GM12878 (cell line): ENCODE measurements at regions of chr12 and their contacts with region 1.

Region 1: GRCh38 chr12:779745-780734 is 27.7 kb downstream of the WNK1 start:
- DNase-seq: no peak
- ATAC-seq: peak; percentile 50
- H3K4me3 ChIP-seq: peak overlapping the region; percentile 50
- H3K27ac ChIP-seq: peak overlapping the region; percentile 46
- H3K4me1 ChIP-seq: peaks cover 22% of the 10 kb centered on the region
- H3K27me3 ChIP-seq: no peaks in the 10 kb centered on the region
- CTCF ChIP-seq: no peak
- EP300 ChIP-seq: no peak
- POLR2A ChIP-seq: no peak
- RAD21 ChIP-seq: no peak

Region 2: GRCh38 chr12:288687-289086 is 491.4 kb before region 1 on chr12:
- CTCF ChIA-PET with region 1: no interaction called
- POLR2A ChIA-PET with region 1: no interaction called
- RAD21 ChIA-PET with region 1: no interaction called
- SMC1A ChIA-PET with region 1: no interaction called
- in situ Hi-C with region 1: no loop called
- intact Hi-C with region 1: no loop called
- DNase-seq: no peak
- ATAC-seq: no peak
- H3K4me3 ChIP-seq: no peak overlapping the region
- H3K27ac ChIP-seq: no peak overlapping the region
- H3K4me1 ChIP-seq: peaks cover 7% of the 10 kb centered on the region
- H3K27me3 ChIP-seq: no peaks in the 10 kb centered on the region
- CTCF ChIP-seq: no peak
- EP300 ChIP-seq: no peak
- POLR2A ChIP-seq: no peak
- RAD21 ChIP-seq: no peak

Region 3: DNA sequence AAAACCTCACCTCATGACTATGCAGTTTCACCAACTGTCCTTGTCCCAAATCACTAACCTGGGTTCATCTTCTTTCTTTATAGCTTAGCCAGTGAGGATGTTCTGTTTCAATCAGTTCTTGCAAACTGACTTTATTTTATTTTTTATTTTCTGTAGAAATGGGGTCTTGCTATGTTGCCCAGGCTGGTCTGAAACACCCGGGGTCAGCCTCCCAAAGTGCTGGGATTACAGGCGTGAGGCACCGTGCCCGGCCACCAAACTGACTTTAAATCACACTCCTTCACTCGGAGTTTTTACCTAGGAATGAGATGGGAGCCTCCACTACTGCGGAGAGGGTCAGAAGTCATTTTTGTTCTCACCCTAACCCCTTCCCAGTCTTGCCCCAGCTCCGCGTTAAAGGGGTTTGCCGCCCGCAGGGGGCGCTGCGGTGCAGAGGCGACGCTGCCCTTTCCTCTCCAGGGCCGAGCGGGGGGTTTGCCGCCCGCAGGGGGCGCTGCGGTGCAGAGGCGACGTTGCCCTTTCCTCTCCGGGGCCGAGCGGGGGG is 327.3 kb before region 1 on chr12:
- CTCF ChIA-PET with region 1: no interaction called
- POLR2A ChIA-PET with region 1: no interaction called
- RAD21 ChIA-PET with region 1: no interaction called
- SMC1A ChIA-PET with region 1: no interaction called
- in situ Hi-C with region 1: no loop called
- intact Hi-C with region 1: no loop called
- DNase-seq: no peak
- ATAC-seq: peak; percentile 92
- H3K4me3 ChIP-seq: no peak overlapping the region
- H3K27ac ChIP-seq: no peak overlapping the region
- H3K4me1 ChIP-seq: no peaks in the 10 kb centered on the region
- H3K27me3 ChIP-seq: peaks cover 0 to 4% of the 10 kb centered on the region in 2 experiments; a peak in 2 of 4 replicates
- CTCF ChIP-seq: peak in 2 of 3 experiments; percentile 44 to 65; a peak in 4 of 6 replicates
- EP300 ChIP-seq: no peak
- POLR2A ChIP-seq: no peak
- RAD21 ChIP-seq: no peak

Region 4: GRCh38 chr12:614411-614970 is 165.5 kb before region 1 on chr12:
- CTCF ChIA-PET with region 1: interaction called, 3 read pairs
- POLR2A ChIA-PET with region 1: no interaction called
- RAD21 ChIA-PET with region 1: interaction called, 5 read pairs
- SMC1A ChIA-PET with region 1: interaction called, 11 read pairs
- in situ Hi-C with region 1: no loop called
- intact Hi-C with region 1: no loop called
- DNase-seq: no peak
- ATAC-seq: peak; percentile 78
- H3K4me3 ChIP-seq: no peak overlapping the region
- H3K27ac ChIP-seq: no peak overlapping the region
- H3K4me1 ChIP-seq: peaks cover 10% of the 10 kb centered on the region
- H3K27me3 ChIP-seq: no peaks in the 10 kb centered on the region
- CTCF ChIP-seq: peak; percentile 61 to 86 (median 63)
- EP300 ChIP-seq: no peak
- POLR2A ChIP-seq: no peak
- RAD21 ChIP-seq: peak; percentile 75

Region 5: GRCh38 chr12:768434-768833 is 11.6 kb before region 1 on chr12:
- CTCF ChIA-PET with region 1: interaction called, 11 read pairs
- POLR2A ChIA-PET with region 1: interaction called, 5 read pairs
- RAD21 ChIA-PET with region 1: interaction called, 5 read pairs
- SMC1A ChIA-PET with region 1: interaction called, 13 read pairs
- in situ Hi-C with region 1: no loop called
- intact Hi-C with region 1: no loop called
- DNase-seq: no peak
- ATAC-seq: peak; percentile 71
- H3K4me3 ChIP-seq: no peak overlapping the region
- H3K27ac ChIP-seq: no peak overlapping the region
- H3K4me1 ChIP-seq: peaks cover 6% of the 10 kb centered on the region
- H3K27me3 ChIP-seq: no peaks in the 10 kb centered on the region
- CTCF ChIP-seq: no peak
- EP300 ChIP-seq: no peak
- POLR2A ChIP-seq: no peak
- RAD21 ChIP-seq: no peak

Region 6: DNA sequence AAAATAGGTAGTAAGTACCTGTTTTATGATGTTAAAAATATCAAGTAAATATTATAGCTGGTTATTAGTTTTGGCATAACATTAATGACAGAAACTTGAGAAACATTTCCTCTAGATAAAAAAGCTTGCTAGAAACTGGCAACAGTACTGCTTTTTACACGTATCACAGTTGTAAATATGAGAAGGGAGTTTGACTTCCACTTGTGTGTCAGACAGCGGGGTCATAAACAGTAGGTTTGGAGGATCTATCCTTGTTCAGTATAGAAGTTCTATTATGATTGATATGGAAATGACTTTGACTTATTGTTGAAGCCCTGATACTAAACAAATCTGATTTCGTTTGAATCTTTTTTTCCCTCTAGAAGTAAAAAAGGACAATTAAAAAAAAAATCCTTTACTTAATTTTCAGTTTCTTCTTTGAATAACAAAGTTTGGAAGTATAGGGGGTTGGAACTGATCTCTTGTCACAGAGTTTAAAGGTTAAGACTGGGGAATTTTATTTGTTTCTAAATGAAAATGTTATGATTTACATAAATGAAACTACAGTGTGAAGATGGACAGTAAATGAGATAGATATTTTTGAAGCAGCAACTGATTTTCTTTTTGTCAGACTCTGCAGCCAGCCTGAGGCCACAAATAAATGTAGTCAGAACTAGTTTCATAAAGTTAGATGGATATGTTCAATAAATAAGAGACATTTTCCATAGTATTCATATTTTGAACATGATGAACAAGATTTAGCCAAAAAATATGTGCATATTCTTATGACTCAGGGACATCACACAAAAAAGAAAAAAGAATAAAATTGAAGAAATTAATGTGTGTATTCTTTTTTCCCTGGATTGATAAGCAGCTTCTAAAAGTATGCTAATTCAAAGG is 22.4 kb after region 1 on chr12:
- CTCF ChIA-PET with region 1: interaction called, 4 read pairs
- POLR2A ChIA-PET with region 1: interaction called, 6 read pairs
- RAD21 ChIA-PET with region 1: interaction called, 4 read pairs
- SMC1A ChIA-PET with region 1: interaction called, 26 read pairs
- in situ Hi-C with region 1: no loop called
- intact Hi-C with region 1: no loop called
- DNase-seq: no peak
- ATAC-seq: peak; percentile 56
- H3K4me3 ChIP-seq: no peak overlapping the region
- H3K27ac ChIP-seq: peak overlapping the region; percentile 59
- H3K4me1 ChIP-seq: peaks cover 48% of the 10 kb centered on the region
- H3K27me3 ChIP-seq: no peaks in the 10 kb centered on the region
- CTCF ChIP-seq: no peak
- EP300 ChIP-seq: no peak
- POLR2A ChIP-seq: no peak
- RAD21 ChIP-seq: no peak